Activated CD4-positive, alpha-beta memory T cell treated with anti-CD3 and anti-CD28 coated beads, Interleukin-2, amount 10 ng/mL, durations not matched to agents 7 days and 5 days (primary cell): ENCODE measurements at regions of chr17 and their contacts with region 1.

Region 1: GRCh38 chr17:17890773-17891759 is 54.3 kb upstream of the SREBF1 start:
- DNase-seq: peak; percentile 57
- H3K4me3 Mint-ChIP-seq: no peak overlapping the region
- H3K27ac Mint-ChIP-seq: no peak overlapping the region
- H3K4me1 Mint-ChIP-seq: no peaks in the 10 kb centered on the region
- H3K27me3 Mint-ChIP-seq: no peaks in the 10 kb centered on the region

Region 2: GRCh38 chr17:17942846-17943245 is 51.8 kb after region 1 on chr17:
- CTCF ChIA-PET with region 1: no interaction called
- POLR2A ChIA-PET with region 1: no interaction called
- DNase-seq: no peak
- H3K4me3 Mint-ChIP-seq: no peak overlapping the region
- H3K27ac Mint-ChIP-seq: no peak overlapping the region
- H3K4me1 Mint-ChIP-seq: peaks cover 11% of the 10 kb centered on the region
- H3K27me3 Mint-ChIP-seq: no peaks in the 10 kb centered on the region

Region 3: GRCh38 chr17:18033442-18034099 is 142.5 kb after region 1 on chr17:
- CTCF ChIA-PET with region 1: interaction called, 39 read pairs
- POLR2A ChIA-PET with region 1: no interaction called
- DNase-seq: peak; percentile 64
- H3K4me3 Mint-ChIP-seq: no peak overlapping the region
- H3K27ac Mint-ChIP-seq: no peak overlapping the region
- H3K4me1 Mint-ChIP-seq: peaks cover 43% of the 10 kb centered on the region
- H3K27me3 Mint-ChIP-seq: no peaks in the 10 kb centered on the region